MCF 10A (cell line): ENCODE measurements at regions of chr20 and their contacts with region 1.

Region 1: GRCh38 chr20:39264506-39265172 is 302.5 kb downstream of the DHX35 start:
- DNase-seq: peak; percentile 86
- H3K4me3 Mint-ChIP-seq: no peak overlapping the region
- H3K27ac Mint-ChIP-seq: no peak overlapping the region
- H3K4me1 Mint-ChIP-seq: peaks cover 19% of the 10 kb centered on the region
- H3K27me3 Mint-ChIP-seq: no peaks in the 10 kb centered on the region
- CTCF ChIP-seq: peak; percentile 87

Region 2: DNA sequence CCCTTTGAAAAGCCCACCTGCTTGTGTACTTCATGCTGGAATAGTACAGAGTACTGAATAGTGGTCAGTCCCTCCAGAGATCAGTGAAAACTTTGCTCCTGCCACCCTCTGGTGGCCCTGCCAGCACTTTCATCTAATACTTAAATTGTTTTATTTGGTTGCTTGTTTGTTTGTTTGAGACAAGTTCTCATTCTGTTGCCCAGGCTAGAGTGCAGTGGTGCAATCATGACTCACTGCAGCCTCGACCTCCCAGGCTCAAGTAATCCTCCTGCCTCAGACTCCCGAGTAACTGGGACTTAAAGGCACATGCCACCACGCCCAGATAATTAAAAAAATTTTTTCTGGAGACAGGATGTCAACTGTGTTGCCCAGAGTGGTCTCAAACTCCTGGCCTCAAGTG is 329.4 kb before region 1 on chr20:
- CTCF ChIA-PET with region 1: no interaction called
- POLR2A ChIA-PET with region 1: no interaction called
- intact Hi-C with region 1: no loop called
- DNase-seq: peak; percentile 62
- H3K4me3 Mint-ChIP-seq: no peak overlapping the region
- H3K27ac Mint-ChIP-seq: peak overlapping the region; percentile 74
- H3K4me1 Mint-ChIP-seq: peaks cover 29% of the 10 kb centered on the region
- H3K27me3 Mint-ChIP-seq: no peaks in the 10 kb centered on the region
- CTCF ChIP-seq: peak; percentile 31

Region 3: DNA sequence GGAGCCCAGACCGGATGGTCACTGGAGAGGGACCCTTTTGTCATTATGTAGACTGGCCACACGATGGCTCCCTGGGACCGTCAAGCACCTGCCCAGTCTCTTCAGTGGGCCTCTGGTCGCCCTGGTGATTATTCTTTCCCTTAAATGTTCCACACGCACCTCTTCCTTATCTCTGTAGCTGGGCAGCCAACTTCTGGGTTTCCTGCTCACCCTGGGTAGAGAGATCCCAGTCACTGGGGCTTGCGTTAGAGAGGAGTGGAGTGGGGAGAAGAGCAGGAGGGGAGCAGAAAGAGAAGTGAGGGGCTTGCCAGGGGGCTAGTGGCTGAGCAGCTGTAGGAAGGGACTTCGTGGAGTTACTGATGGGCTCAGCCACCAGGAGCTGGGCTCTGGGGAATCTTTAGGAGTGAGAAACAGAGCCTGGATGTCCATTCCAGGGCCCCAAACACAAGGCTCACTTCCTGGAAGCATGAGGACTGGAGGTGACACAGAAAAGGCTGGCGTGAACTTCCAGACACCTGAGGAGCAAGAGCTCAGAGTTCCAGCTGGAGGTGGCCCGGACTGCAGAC is 152.4 kb before region 1 on chr20:
- CTCF ChIA-PET with region 1: interaction called, 153 read pairs
- POLR2A ChIA-PET with region 1: no interaction called
- intact Hi-C with region 1: loop called (anchors 1 kb)
- DNase-seq: peak; percentile 50
- H3K4me3 Mint-ChIP-seq: no peak overlapping the region
- H3K27ac Mint-ChIP-seq: no peak overlapping the region
- H3K4me1 Mint-ChIP-seq: peaks cover 5% of the 10 kb centered on the region
- H3K27me3 Mint-ChIP-seq: peaks cover 36% of the 10 kb centered on the region
- CTCF ChIP-seq: peak; percentile 88

Region 4: DNA sequence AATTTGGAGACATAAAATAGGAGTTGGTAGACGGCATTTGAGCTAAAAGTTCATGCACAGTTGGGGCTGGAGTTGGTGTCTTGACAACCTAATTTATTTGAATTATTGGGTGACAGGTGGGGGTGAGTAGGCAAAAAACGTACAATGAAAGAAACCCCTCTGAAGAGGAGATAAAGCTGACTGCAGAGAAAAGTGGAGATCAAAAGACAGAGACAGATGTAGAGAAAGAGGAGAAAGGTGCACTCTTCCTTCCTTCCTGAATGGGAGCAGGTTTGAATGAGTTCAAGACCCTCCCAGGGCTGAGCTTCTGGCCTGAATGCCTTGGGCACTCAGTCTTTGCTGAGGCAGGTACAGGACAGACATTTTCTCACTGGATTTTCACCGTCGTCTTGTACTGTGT is 18.2 kb before region 1 on chr20:
- CTCF ChIA-PET with region 1: interaction called, 10 read pairs
- POLR2A ChIA-PET with region 1: no interaction called
- intact Hi-C with region 1: no loop called
- DNase-seq: no peak
- H3K4me3 Mint-ChIP-seq: no peak overlapping the region
- H3K27ac Mint-ChIP-seq: no peak overlapping the region
- H3K4me1 Mint-ChIP-seq: no peaks in the 10 kb centered on the region
- H3K27me3 Mint-ChIP-seq: peaks cover 32% of the 10 kb centered on the region
- CTCF ChIP-seq: no peak

Region 5: GRCh38 chr20:39429716-39430115 is 165.1 kb after region 1 on chr20:
- CTCF ChIA-PET with region 1: interaction called, 15 read pairs
- POLR2A ChIA-PET with region 1: no interaction called
- intact Hi-C with region 1: loop called (anchors 5 kb)
- DNase-seq: peak; percentile 8
- H3K4me3 Mint-ChIP-seq: no peak overlapping the region
- H3K27ac Mint-ChIP-seq: no peak overlapping the region
- H3K4me1 Mint-ChIP-seq: peaks cover 7% of the 10 kb centered on the region
- H3K27me3 Mint-ChIP-seq: no peaks in the 10 kb centered on the region
- CTCF ChIP-seq: peak; percentile 27

Region 6: DNA sequence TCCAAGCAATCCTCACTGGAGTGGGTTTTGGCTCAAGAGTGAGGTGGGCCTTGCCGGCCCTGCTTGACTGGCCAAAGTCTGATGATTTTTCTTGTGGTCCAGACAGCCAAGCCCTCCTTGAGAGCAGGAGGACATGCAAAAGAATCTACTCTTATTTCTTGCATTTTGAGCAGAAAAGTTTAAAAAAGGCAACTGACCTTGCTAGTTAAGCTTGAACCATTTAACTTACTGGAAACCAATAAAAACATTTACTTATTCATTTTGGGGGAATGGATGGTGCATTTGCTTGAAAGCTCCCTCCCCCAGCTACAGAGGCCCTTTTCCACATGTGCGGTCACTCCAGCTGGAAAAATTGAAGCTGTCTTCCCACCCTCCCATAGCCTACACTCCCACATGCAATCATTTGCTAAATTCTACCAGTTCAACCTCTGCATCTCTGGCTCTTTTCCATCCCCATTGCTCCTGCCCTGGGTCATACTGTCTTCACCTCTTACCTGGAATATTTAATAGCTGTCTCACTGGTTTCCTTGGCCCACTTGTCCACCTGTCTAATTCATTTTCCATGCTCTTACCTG is 225.4 kb after region 1 on chr20:
- CTCF ChIA-PET with region 1: no interaction called
- POLR2A ChIA-PET with region 1: no interaction called
- intact Hi-C with region 1: no loop called
- DNase-seq: no peak
- H3K4me3 Mint-ChIP-seq: no peak overlapping the region
- H3K27ac Mint-ChIP-seq: no peak overlapping the region
- H3K4me1 Mint-ChIP-seq: no peaks in the 10 kb centered on the region
- H3K27me3 Mint-ChIP-seq: no peaks in the 10 kb centered on the region
- CTCF ChIP-seq: no peak

Region 7: DNA sequence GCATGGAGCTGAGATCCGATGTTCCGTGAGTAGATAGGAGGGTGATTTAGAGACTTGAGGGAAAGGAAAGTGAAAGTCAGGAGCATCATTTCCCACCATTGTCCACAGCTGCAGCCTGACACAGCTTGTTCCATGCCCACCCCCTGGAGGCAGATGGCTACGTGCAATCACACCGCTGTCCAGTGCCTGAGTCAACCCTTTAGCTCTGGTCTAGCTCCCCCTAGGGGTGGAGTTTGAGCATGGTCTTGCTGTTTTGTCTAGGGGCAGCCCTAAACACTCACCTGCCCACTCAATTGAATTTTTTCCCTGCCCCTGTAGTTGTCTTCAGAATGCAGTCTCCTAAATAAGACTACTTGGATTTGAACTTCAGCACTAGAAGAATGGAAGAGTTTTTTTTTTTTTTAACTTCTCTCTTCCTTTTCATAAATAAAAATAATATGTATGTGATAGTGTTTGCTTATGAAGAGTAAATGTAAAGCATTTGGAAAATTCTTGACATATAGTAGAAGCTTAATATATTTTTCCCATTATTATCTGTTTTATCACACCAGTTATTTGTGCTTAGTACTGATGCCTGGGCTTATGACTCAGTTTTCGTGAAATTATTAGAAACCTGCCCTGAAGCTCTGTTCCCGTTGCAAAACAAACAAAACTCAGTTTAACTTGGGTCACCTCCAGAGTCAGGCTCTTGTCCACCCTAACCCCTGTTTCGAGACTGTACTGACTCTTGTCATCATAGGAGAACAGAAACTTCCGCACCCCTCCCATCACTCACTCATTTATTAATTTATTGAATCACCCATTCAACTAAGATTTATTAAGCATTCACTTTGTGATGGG is 609.6 kb after region 1 on chr20:
- CTCF ChIA-PET with region 1: interaction called, 26 read pairs
- POLR2A ChIA-PET with region 1: no interaction called
- intact Hi-C with region 1: loop called (anchors 1 kb)
- DNase-seq: peak; percentile 88
- H3K4me3 Mint-ChIP-seq: no peak overlapping the region
- H3K27ac Mint-ChIP-seq: no peak overlapping the region
- H3K4me1 Mint-ChIP-seq: peaks cover 50% of the 10 kb centered on the region
- H3K27me3 Mint-ChIP-seq: no peaks in the 10 kb centered on the region
- CTCF ChIP-seq: peak; percentile 93

Region 8: DNA sequence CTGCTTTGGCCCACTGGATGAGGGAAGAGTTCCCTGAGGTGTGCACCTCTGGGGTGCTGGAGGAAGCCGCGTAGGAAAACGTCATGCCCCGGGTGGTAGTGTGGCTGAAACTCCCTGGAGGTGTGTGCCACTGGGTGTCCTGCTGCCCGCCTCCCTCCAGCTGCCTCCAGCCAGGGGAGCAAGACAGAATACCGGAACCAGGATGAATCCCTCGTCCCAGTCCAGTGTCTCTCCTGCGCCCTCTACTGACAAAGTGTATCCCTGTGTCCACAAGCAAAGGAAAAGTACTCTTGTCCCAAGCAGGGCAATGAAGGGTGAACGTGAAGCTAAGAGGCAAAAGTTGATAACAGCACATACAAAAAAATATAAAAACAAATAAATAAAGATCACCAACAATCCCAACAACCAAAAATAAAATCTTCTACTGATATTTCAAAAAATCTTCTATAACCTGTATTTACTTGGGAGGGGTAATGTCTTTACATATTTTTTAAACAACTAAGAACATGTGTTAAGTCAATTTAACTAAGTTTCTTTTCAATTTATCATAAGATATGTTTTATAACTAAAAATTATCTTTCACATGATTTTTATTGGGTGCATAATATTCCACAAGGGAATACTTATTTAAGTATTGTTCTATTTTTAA is 986.8 kb after region 1 on chr20:
- CTCF ChIA-PET with region 1: interaction called, 8 read pairs
- POLR2A ChIA-PET with region 1: no interaction called
- intact Hi-C with region 1: loop called (anchors 1 kb)
- DNase-seq: peak; percentile 76
- H3K4me3 Mint-ChIP-seq: no peak overlapping the region
- H3K27ac Mint-ChIP-seq: no peak overlapping the region
- H3K4me1 Mint-ChIP-seq: peaks cover 8% of the 10 kb centered on the region
- H3K27me3 Mint-ChIP-seq: no peaks in the 10 kb centered on the region
- CTCF ChIP-seq: peak; percentile 52